ENCODE measurements at regions of chr14 and their contacts with region 1.

Region 1: DNA sequence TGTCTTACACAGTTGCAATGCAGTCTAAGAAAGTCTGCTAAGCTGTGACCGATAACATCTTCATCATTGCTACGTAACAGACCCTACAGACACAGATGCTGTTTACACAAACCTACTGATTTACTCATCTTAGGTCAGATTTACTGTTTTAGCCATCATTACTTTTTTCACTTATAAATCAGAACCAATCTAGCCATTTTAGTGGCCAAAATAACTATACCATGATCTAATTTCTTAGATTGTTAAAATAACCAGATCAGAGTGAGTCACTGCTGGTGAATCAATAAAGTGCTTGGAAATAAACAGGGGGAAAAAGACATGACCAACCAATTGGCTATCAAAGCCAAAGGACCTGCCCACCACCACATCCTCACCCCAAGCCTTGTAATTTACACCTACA is 57.0 kb upstream of the FOXN3 start:
- DNase-seq: no peak
- H3K4me3 ChIP-seq: no peak overlapping the region
- H3K4me3 Mint-ChIP-seq: no peak overlapping the region
- H3K27ac ChIP-seq: no peak overlapping the region
- H3K27ac Mint-ChIP-seq: no peak overlapping the region
- H3K4me1 ChIP-seq: peaks cover 41 to 53% of the 10 kb centered on the region in 2 donors
- H3K4me1 Mint-ChIP-seq: peaks cover 55% of the 10 kb centered on the region
- H3K27me3 ChIP-seq: no peaks in the 10 kb centered on the region
- H3K27me3 Mint-ChIP-seq: peaks cover 0 to 4% (median 2%) of the 10 kb centered on the region in 3 donors
- CTCF ChIP-seq: no peak

Region 2: DNA sequence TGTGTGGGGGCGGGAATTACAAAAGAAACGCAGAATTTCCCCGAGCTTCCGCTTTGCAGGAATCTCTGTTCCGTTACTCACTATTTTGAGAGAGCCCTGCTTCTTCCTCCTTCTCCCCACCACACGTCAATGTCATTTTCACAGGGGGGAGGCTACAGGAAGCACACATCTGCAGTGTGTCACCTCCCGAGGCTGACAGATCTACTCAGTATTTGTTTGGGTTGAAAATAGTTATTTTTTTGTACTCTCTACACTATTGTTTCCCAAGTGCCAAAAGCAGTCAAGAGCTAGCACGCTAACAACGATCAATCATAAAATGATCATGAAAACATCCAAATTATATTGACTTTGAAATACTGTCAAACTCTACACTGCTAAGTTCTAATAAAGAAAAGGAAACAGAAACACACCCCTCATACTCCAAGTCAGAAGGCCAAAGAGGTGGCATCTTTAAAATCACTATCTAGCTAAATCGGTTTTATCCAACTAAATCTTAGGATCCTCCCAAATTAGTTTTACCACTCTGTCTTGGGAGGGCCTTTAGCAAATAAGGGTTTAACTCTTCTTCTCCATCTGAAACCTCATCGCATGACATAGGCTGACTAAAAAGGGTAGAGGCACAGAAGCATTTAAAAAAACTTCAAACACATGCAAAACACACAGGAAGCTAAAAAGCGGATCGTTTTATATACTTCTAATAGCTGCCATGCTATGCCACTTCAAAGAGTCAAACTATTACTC is 108.8 kb before region 1 on chr14:
- intact Hi-C with region 1: no loop called
- DNase-seq: peak; percentile 83 to 97 (median 93)
- H3K4me3 ChIP-seq: peak overlapping the region in 1 of 3 experiments; percentile 60
- H3K4me3 Mint-ChIP-seq: peak overlapping the region; percentile 40 to 67
- H3K27ac ChIP-seq: peak overlapping the region; percentile 67 to 92
- H3K27ac Mint-ChIP-seq: peak overlapping the region; percentile 89 to 96 (median 93)
- H3K4me1 ChIP-seq: peaks cover 50 to 55% of the 10 kb centered on the region in 2 donors
- H3K4me1 Mint-ChIP-seq: peaks cover 58% of the 10 kb centered on the region
- H3K27me3 ChIP-seq: no peaks in the 10 kb centered on the region
- H3K27me3 Mint-ChIP-seq: peaks cover 0 to 2% (median 0%) of the 10 kb centered on the region in 3 donors
- CTCF ChIP-seq: no peak

Region 3: GRCh38 chr14:89388853-89389252 is 85.1 kb before region 1 on chr14:
- intact Hi-C with region 1: no loop called
- DNase-seq: no peak
- H3K4me3 ChIP-seq: no peak overlapping the region
- H3K4me3 Mint-ChIP-seq: no peak overlapping the region
- H3K27ac ChIP-seq: peak overlapping the region in 1 of 2 donors; percentile 49
- H3K27ac Mint-ChIP-seq: peak overlapping the region in 2 of 7 donors; percentile 47 to 73
- H3K4me1 ChIP-seq: no peaks in the 10 kb centered on the region
- H3K4me1 Mint-ChIP-seq: peaks cover 17% of the 10 kb centered on the region
- H3K27me3 ChIP-seq: no peaks in the 10 kb centered on the region
- H3K27me3 Mint-ChIP-seq: peaks cover 0 to 2% (median 0%) of the 10 kb centered on the region in 3 donors
- CTCF ChIP-seq: no peak

Region 4: GRCh38 chr14:89455412-89455811 is 18.6 kb before region 1 on chr14:
- intact Hi-C with region 1: loop called in 1 of 2 experiments (anchors 2 kb)
- DNase-seq: no peak
- H3K4me3 ChIP-seq: no peak overlapping the region
- H3K4me3 Mint-ChIP-seq: no peak overlapping the region
- H3K27ac ChIP-seq: no peak overlapping the region
- H3K27ac Mint-ChIP-seq: peak overlapping the region in 1 of 7 donors; percentile 55
- H3K4me1 ChIP-seq: peaks cover 44 to 50% of the 10 kb centered on the region in 2 donors
- H3K4me1 Mint-ChIP-seq: peaks cover 55% of the 10 kb centered on the region
- H3K27me3 ChIP-seq: no peaks in the 10 kb centered on the region
- H3K27me3 Mint-ChIP-seq: peaks cover 0 to 1% (median 0%) of the 10 kb centered on the region in 3 donors
- CTCF ChIP-seq: no peak

Measured in CD14-positive monocyte (primary cell).